CD4-positive, alpha-beta T cell (primary cell): ENCODE measurements at regions of chr1 and their contacts with region 1.

Region 1: GRCh38 chr1:2412519-2413233 is at the start of gene PEX10:
- DNase-seq: peak; percentile 95 to 99 (median 98)
- ATAC-seq: peak; percentile 89
- H3K4me3 ChIP-seq: peak within 1 kb of the TSS; percentile 67
- H3K4me3 Mint-ChIP-seq: peak within 1 kb of the TSS; percentile 94
- H3K27ac ChIP-seq: peak within 1 kb of the TSS; percentile 69 to 72
- H3K27ac Mint-ChIP-seq: peak within 1 kb of the TSS; percentile 92
- H3K4me1 ChIP-seq: peaks cover 57% of the 10 kb centered on the region
- H3K4me1 Mint-ChIP-seq: peaks cover 32% of the 10 kb centered on the region
- H3K27me3 ChIP-seq: no peaks in the 10 kb centered on the region
- H3K27me3 Mint-ChIP-seq: no peaks in the 10 kb centered on the region
- CTCF ChIP-seq: no peak
- total RNA-seq, gene PEX10: 12.0 to 12.5 TPM

Region 2: GRCh38 chr1:2391041-2391930 is 21.4 kb before region 1 on chr1 and contains the starts of genes MORN1 and RER1:
- CTCF ChIA-PET with region 1: interaction called, 6 read pairs
- POLR2A ChIA-PET with region 1: interaction called, 7 read pairs
- intact Hi-C with region 1: loop called in 1 of 2 experiments (anchors 1 kb)
- DNase-seq: peak; percentile 97 to 100 (median 99)
- ATAC-seq: peak; percentile 95
- H3K4me3 ChIP-seq: peak within 1 kb of the TSS; percentile 64
- H3K4me3 Mint-ChIP-seq: peak within 1 kb of the TSS; percentile 95
- H3K27ac ChIP-seq: peak within 1 kb of the TSS; percentile 60 to 63
- H3K27ac Mint-ChIP-seq: peak within 1 kb of the TSS; percentile 88
- H3K4me1 ChIP-seq: peaks cover 45% of the 10 kb centered on the region
- H3K4me1 Mint-ChIP-seq: peaks cover 31% of the 10 kb centered on the region
- H3K27me3 ChIP-seq: no peaks in the 10 kb centered on the region
- H3K27me3 Mint-ChIP-seq: no peaks in the 10 kb centered on the region
- CTCF ChIP-seq: no peak
- total RNA-seq, gene MORN1: 5.3 to 6.5 TPM
- total RNA-seq, gene RER1: 57.9 to 60.7 TPM

Region 3: GRCh38 chr1:2556277-2556677 is 143.6 kb after region 1 on chr1 and contains the start of gene TNFRSF14:
- CTCF ChIA-PET with region 1: interaction called, 6 read pairs
- POLR2A ChIA-PET with region 1: interaction called, 11 read pairs
- intact Hi-C with region 1: no loop called
- DNase-seq: peak; percentile 54 to 90 (median 62)
- ATAC-seq: peak; percentile 79
- H3K4me3 ChIP-seq: peak within 1 kb of the TSS; percentile 99
- H3K4me3 Mint-ChIP-seq: peak within 1 kb of the TSS; percentile 97
- H3K27ac ChIP-seq: peak within 1 kb of the TSS; percentile 96
- H3K27ac Mint-ChIP-seq: peak within 1 kb of the TSS; percentile 98
- H3K4me1 ChIP-seq: peaks cover 59% of the 10 kb centered on the region
- H3K4me1 Mint-ChIP-seq: peaks cover 35% of the 10 kb centered on the region
- H3K27me3 ChIP-seq: no peaks in the 10 kb centered on the region
- H3K27me3 Mint-ChIP-seq: no peaks in the 10 kb centered on the region
- CTCF ChIP-seq: peak; percentile 24
- total RNA-seq, gene TNFRSF14: 191 to 194 TPM

Region 4: DNA sequence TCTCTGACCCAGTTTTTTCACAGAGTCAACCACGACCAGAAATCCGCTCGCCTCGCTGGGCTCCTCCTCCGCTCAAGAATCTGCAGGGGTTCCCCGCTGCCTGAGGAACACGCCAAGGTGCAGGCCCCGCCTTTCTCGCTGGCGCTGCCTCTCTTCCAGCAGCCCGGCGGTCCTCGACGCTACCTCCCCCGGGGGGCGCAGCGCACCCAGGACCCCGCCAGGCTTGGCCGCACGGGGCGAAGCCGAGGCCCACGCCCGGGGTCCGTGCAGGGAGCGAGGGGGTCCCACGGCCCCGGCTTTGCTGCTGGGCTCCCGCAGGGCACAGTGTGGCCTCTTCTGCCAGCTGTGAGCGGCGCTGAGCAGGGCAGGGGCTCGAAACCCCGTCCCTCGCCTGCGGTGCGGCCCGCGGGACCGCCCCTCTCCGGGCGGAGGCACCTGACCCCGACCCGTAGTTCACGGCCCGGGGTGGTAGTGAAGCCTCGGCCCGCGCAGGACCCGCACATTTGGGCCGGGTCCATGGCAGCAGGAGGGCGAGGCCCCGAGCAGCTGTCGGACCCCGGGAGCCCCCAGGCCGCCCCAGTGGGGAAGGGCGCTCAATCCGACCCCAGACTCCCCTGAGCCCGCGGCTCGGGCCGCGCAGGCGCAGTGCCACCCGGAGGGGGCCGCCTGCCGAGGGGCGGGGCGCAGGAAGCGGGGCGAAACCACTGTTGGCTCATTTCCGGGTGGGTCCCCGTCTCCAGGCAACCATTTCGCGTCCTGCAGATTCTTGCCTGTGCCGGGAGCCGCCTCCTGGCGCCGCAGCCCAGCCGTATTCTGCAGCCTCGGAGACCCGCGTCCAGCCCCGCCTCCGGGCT is 230.1 kb after region 1 on chr1:
- CTCF ChIA-PET with region 1: no interaction called
- POLR2A ChIA-PET with region 1: no interaction called
- intact Hi-C with region 1: loop called (anchors 1 to 5 kb)
- DNase-seq: peak; percentile 89 to 97 (median 94)
- ATAC-seq: peak; percentile 84
- H3K4me3 ChIP-seq: peak overlapping the region; percentile 61
- H3K4me3 Mint-ChIP-seq: peak overlapping the region; percentile 89
- H3K27ac ChIP-seq: peak overlapping the region; percentile 69 to 96
- H3K27ac Mint-ChIP-seq: peak overlapping the region; percentile 89
- H3K4me1 ChIP-seq: peaks cover 29% of the 10 kb centered on the region
- H3K4me1 Mint-ChIP-seq: peaks cover 12% of the 10 kb centered on the region
- H3K27me3 ChIP-seq: no peaks in the 10 kb centered on the region
- H3K27me3 Mint-ChIP-seq: no peaks in the 10 kb centered on the region
- CTCF ChIP-seq: no peak

Region 5: GRCh38 chr1:2840036-2840809 is 427.5 kb after region 1 on chr1:
- CTCF ChIA-PET with region 1: no interaction called
- POLR2A ChIA-PET with region 1: no interaction called
- intact Hi-C with region 1: loop called (anchors 1 to 2 kb)
- DNase-seq: peak; percentile 52 to 86 (median 68)
- ATAC-seq: peak; percentile 89
- H3K4me3 ChIP-seq: peak overlapping the region; percentile 35
- H3K4me3 Mint-ChIP-seq: peak overlapping the region; percentile 83
- H3K27ac ChIP-seq: peak overlapping the region; percentile 11 to 55
- H3K27ac Mint-ChIP-seq: peak overlapping the region; percentile 85
- H3K4me1 ChIP-seq: peaks cover 17% of the 10 kb centered on the region
- H3K4me1 Mint-ChIP-seq: peaks cover 23% of the 10 kb centered on the region
- H3K27me3 ChIP-seq: no peaks in the 10 kb centered on the region
- H3K27me3 Mint-ChIP-seq: no peaks in the 10 kb centered on the region
- CTCF ChIP-seq: peak; percentile 84